Activated CD8-positive, alpha-beta T cell treated with anti-CD3 and anti-CD28 coated beads for 36 hours (primary cell): ENCODE measurements at regions of chr12 and their contacts with region 1.

Region 1: GRCh38 chr12:13211859-13212664 is 15.5 kb downstream of the EMP1 start:
- DNase-seq: peak; percentile 84
- ATAC-seq: peak; percentile 68
- H3K4me3 Mint-ChIP-seq: no peak overlapping the region
- H3K27ac Mint-ChIP-seq: peak overlapping the region; percentile 9
- H3K4me1 Mint-ChIP-seq: peaks cover 19% of the 10 kb centered on the region
- H3K27me3 Mint-ChIP-seq: peaks cover 3% of the 10 kb centered on the region
- CTCF ChIP-seq: peak; percentile 93

Region 2: GRCh38 chr12:12837025-12837872 is 374.8 kb before region 1 on chr12:
- CTCF ChIA-PET with region 1: interaction called, 15 read pairs
- POLR2A ChIA-PET with region 1: no interaction called
- intact Hi-C with region 1: no loop called
- DNase-seq: peak; percentile 65
- ATAC-seq: peak; percentile 94
- H3K4me3 Mint-ChIP-seq: no peak overlapping the region
- H3K27ac Mint-ChIP-seq: no peak overlapping the region
- H3K4me1 Mint-ChIP-seq: peaks cover 26% of the 10 kb centered on the region
- H3K27me3 Mint-ChIP-seq: no peaks in the 10 kb centered on the region
- CTCF ChIP-seq: peak; percentile 46

Region 3: GRCh38 chr12:12999959-13000615 is 212.0 kb before region 1 on chr12 and contains the start of gene HEBP1:
- CTCF ChIA-PET with region 1: no interaction called
- POLR2A ChIA-PET with region 1: no interaction called
- intact Hi-C with region 1: loop called (anchors 5 kb)
- DNase-seq: peak; percentile 95
- ATAC-seq: peak; percentile 96
- H3K4me3 Mint-ChIP-seq: peak within 1 kb of the TSS; percentile 86
- H3K27ac Mint-ChIP-seq: peak within 1 kb of the TSS; percentile 66
- H3K4me1 Mint-ChIP-seq: peaks cover 24% of the 10 kb centered on the region
- H3K27me3 Mint-ChIP-seq: peaks cover 8% of the 10 kb centered on the region
- CTCF ChIP-seq: no peak
- total RNA-seq, gene HEBP1: 23.9 to 24.8 TPM

Region 4: GRCh38 chr12:13067322-13067721 is 144.7 kb before region 1 on chr12:
- CTCF ChIA-PET with region 1: interaction called, 11 read pairs
- POLR2A ChIA-PET with region 1: no interaction called
- intact Hi-C with region 1: no loop called
- DNase-seq: no peak
- ATAC-seq: no peak
- H3K4me3 Mint-ChIP-seq: no peak overlapping the region
- H3K27ac Mint-ChIP-seq: no peak overlapping the region
- H3K4me1 Mint-ChIP-seq: no peaks in the 10 kb centered on the region
- H3K27me3 Mint-ChIP-seq: no peaks in the 10 kb centered on the region
- CTCF ChIP-seq: no peak

Region 5: GRCh38 chr12:13100882-13101769 is 110.9 kb before region 1 on chr12:
- CTCF ChIA-PET with region 1: interaction called, 150 read pairs
- POLR2A ChIA-PET with region 1: interaction called, 3 read pairs
- intact Hi-C with region 1: loop called (anchors 1 kb)
- DNase-seq: peak; percentile 94
- ATAC-seq: peak; percentile 86
- H3K4me3 Mint-ChIP-seq: peak overlapping the region; percentile 60
- H3K27ac Mint-ChIP-seq: peak overlapping the region; percentile 76
- H3K4me1 Mint-ChIP-seq: peaks cover 47% of the 10 kb centered on the region
- H3K27me3 Mint-ChIP-seq: no peaks in the 10 kb centered on the region
- CTCF ChIP-seq: no peak

Region 6: DNA sequence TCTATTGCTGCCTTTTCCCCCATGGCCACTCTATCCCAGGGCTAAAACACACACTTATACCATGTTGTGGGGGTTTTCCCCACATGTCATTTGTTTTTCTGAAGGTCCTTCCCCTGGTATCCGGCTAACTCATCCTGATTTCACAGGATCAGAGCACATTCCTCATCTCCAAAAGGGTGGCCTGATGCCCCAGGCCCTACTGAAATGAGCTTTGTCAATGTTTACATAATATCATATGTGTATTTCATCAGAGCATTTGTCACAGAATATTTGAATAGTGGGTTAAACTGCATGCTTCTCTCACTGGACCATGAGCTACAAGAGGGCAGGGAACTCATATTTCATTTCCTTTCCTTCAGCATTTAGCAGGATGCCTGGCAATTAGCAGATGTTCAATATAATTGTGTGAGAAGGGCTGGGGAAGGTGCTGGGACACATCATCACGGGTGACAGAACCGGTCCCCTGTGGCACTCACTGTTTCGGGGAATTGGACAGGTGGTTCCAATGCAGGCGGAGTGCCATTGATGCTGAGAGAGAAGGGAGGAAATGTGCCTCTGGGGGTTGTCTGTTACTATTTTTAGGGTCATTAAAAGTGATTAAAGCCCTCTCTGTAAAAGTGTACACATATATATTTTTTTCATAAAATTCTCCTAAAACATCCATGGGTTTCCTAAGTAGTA is 11.3 kb after region 1 on chr12:
- CTCF ChIA-PET with region 1: interaction called, 58 read pairs
- POLR2A ChIA-PET with region 1: no interaction called
- intact Hi-C with region 1: no loop called
- DNase-seq: no peak
- ATAC-seq: no peak
- H3K4me3 Mint-ChIP-seq: no peak overlapping the region
- H3K27ac Mint-ChIP-seq: no peak overlapping the region
- H3K4me1 Mint-ChIP-seq: no peaks in the 10 kb centered on the region
- H3K27me3 Mint-ChIP-seq: peaks cover 16% of the 10 kb centered on the region
- CTCF ChIP-seq: no peak

Region 7: GRCh38 chr12:13278249-13278787 is 66.3 kb after region 1 on chr12:
- CTCF ChIA-PET with region 1: no interaction called
- POLR2A ChIA-PET with region 1: no interaction called
- intact Hi-C with region 1: no loop called
- DNase-seq: peak; percentile 71
- ATAC-seq: peak; percentile 92
- H3K4me3 Mint-ChIP-seq: no peak overlapping the region
- H3K27ac Mint-ChIP-seq: no peak overlapping the region
- H3K4me1 Mint-ChIP-seq: peaks cover 2% of the 10 kb centered on the region
- H3K27me3 Mint-ChIP-seq: peaks cover 33% of the 10 kb centered on the region
- CTCF ChIP-seq: peak; percentile 98